Activated T-helper 1 cell treated with anti-CD3 and anti-CD28 coated beads, Interleukin-12 subunit alpha, Interleukin-12 subunit beta, Interleukin-2, Interleukin-4 antibody, amounts not matched to agents 30 ng/mL and 10 ng/mL and 1 ng/mL, durations not matched to agents 14 hours and 24 hours and 36 hours (primary cell): ENCODE measurements at regions of chr15 and their contacts with region 1.

Region 1: GRCh38 chr15:72199711-72200212 is 2.2 kb upstream of the GRAMD2A start:
- DNase-seq: peak; percentile 60
- H3K4me3 Mint-ChIP-seq: peak overlapping the region; percentile 5
- H3K27ac Mint-ChIP-seq: no peak overlapping the region
- H3K4me1 Mint-ChIP-seq: peaks cover 39% of the 10 kb centered on the region
- H3K27me3 Mint-ChIP-seq: peaks cover 3% of the 10 kb centered on the region

Region 2: GRCh38 chr15:72285927-72286516 is 86.3 kb after region 1 on chr15:
- intact Hi-C with region 1: loop called (anchors 1 kb)
- DNase-seq: no peak
- H3K4me3 Mint-ChIP-seq: no peak overlapping the region
- H3K27ac Mint-ChIP-seq: peak overlapping the region; percentile 21
- H3K4me1 Mint-ChIP-seq: no peaks in the 10 kb centered on the region
- H3K27me3 Mint-ChIP-seq: no peaks in the 10 kb centered on the region